Pancreas (tissue), 10 donors: ENCODE measurements at regions of chr17 and their contacts with region 1.

Region 1: DNA sequence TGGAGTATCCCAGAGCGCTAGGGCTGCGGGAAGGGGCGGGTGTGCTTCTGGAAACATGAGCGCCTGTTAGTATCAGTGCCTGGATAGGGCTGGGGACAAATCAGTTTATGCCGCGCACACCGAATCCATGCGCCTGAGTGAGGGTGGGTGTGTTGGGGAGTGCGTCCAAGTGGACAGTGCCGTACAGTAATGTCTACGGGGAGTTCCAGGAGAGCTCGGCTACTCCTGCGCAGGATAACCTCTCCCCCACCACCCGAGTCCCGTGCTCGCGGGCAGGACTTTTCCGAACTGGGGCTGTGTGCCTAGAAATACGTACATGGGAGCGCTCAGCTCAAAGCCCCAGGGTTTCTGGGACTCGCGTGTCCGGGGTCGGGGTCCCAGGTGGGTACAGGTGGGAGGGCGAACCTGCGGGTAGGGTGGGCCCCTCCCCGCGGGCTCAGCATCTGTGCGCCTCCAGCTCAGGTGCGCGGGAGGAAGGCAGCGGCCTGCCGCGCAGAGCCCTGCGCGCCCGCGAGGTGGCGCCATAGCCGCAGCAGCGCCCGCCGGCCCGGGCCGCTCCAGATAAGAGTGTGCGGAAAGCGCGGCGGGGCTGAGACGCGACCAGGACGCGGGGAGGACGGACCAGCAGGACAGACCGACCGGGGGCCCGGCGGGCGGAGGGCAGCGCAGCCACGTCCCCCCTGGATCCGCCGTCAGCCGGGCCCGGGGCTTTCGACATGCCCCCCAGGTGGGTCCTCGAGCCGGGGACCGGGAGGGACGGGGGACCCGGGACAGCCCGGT is at the start of gene HIC1:
- DNase-seq: peak; percentile 51 to 93 (median 78)
- ATAC-seq: peak; percentile 66 to 75 (median 69)
- H3K4me3 ChIP-seq: peak within 1 kb of the TSS; percentile 23 to 59 (median 34)
- H3K27ac ChIP-seq: peak within 1 kb of the TSS in 2 of 4 donors; percentile 30 to 55
- H3K4me1 ChIP-seq: peaks cover 0 to 8% (median 3%) of the 10 kb centered on the region in 3 donors
- H3K27me3 ChIP-seq: peaks cover 0 to 3% (median 0%) of the 10 kb centered on the region in 4 donors
- CTCF ChIP-seq: peak; percentile 92 to 98 (median 96)
- total RNA-seq, gene HIC1: 1.0 to 15.8 (median 3.8) TPM

Region 2: GRCh38 chr17:1939981-1940809 is 114.5 kb before region 1 on chr17:
- intact Hi-C with region 1: no loop called
- DNase-seq: no peak
- ATAC-seq: peak in 3 of 4 donors; percentile 42 to 68 (median 54)
- H3K4me3 ChIP-seq: no peak overlapping the region
- H3K27ac ChIP-seq: no peak overlapping the region
- H3K4me1 ChIP-seq: no peaks in the 10 kb centered on the region
- H3K27me3 ChIP-seq: no peaks in the 10 kb centered on the region
- CTCF ChIP-seq: no peak

Region 3: GRCh38 chr17:1958134-1958881 is 96.4 kb before region 1 on chr17:
- intact Hi-C with region 1: no loop called
- DNase-seq: no peak
- ATAC-seq: peak in 3 of 4 donors; percentile 47 to 67 (median 57)
- H3K4me3 ChIP-seq: no peak overlapping the region
- H3K27ac ChIP-seq: no peak overlapping the region
- H3K4me1 ChIP-seq: no peaks in the 10 kb centered on the region
- H3K27me3 ChIP-seq: no peaks in the 10 kb centered on the region
- CTCF ChIP-seq: no peak

Region 4: DNA sequence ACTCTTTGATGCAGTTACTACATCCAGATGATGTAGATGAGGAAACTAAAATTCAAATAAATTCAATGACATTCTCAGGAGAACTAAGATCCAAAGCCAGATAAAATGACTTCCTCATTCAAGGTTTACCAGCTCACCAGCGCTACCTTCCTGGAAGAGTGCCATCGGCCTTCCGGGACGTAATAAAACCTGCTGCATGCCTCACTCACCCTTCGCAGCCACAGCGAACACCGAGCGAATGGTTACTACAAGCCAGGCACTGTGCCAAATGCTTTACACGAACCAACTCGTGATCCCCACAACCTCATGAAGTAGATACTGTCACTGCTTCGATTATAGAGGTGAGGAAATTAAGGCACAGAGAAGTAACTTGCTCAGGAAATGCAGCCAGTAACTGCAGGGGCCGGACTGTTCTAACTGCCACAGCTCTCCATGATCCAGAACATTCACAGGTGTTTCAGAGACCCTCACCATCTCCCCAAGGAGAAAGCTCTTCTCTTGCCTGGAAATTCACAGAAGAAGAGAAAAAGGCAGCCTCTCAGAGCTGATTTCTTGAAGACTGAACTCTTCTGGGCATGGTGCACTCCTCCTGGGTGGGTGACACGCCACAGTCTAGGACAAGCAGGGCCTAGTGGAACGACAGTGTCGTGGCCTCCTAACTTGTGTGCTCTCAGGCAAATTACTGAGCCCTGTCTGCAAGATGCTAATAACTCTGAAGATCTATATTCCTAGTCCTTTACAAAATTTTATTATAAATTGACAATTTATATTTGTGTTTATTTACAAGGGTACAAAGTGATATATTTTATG is 47.0 kb after region 1 on chr17:
- intact Hi-C with region 1: no loop called
- DNase-seq: peak; percentile 55 to 80 (median 72)
- ATAC-seq: peak; percentile 66 to 84 (median 74)
- H3K4me3 ChIP-seq: no peak overlapping the region
- H3K27ac ChIP-seq: peak overlapping the region in 2 of 4 donors; percentile 8 to 38
- H3K4me1 ChIP-seq: no peaks in the 10 kb centered on the region
- H3K27me3 ChIP-seq: no peaks in the 10 kb centered on the region
- CTCF ChIP-seq: no peak

Region 5: DNA sequence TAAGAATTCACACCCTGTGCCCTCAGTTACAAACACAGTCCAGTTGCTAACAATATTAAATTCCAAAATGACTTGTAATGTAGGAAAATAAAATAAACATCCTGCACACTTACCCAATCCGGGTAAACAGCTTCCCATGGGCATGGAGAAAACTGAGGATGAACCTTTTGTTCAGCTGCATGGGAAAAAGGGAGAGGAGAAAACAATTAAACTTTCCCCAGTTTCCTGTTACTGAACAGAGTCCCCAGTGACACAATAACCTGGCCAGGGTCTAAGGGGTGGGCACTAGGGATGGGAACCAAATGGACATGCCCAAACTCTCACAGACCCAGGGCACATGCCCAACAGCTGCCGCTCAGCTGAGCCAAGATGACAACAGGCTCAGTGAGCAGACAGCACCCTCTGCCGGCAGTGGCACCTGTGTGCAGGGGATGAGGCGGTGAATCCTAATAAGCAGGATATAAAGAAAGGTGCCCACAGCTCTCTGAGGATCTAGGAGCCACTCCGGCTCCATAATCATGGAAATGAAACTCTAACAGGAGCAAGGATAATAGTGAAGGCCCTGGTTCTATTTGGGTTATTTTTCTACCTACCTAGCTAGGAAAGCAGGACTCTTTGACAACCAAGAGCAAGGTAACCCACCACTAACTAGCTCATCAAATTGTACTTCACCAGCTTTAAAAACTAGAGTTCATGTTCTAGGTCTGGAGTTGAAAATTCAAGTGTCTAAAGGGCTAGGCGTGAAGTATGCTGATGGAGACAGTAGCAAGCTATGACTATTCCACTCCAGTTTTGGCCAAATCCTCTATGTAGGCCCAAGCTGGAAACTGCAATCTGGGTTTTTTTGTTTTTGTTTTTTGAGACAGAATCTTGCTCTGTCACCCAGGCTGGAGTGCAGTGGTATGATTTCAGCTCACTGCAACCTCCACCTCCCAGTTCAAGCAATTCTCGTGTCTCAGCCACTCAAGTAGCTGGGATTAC is 190.1 kb after region 1 on chr17:
- intact Hi-C with region 1: loop called in 2 of 3 experiments (anchors 2 to 5 kb)
- DNase-seq: peak; percentile 67 to 94 (median 88)
- ATAC-seq: peak; percentile 94 to 99 (median 98)
- H3K4me3 ChIP-seq: no peak overlapping the region
- H3K27ac ChIP-seq: no peak overlapping the region
- H3K4me1 ChIP-seq: peaks cover 0 to 5% (median 0%) of the 10 kb centered on the region in 3 donors
- H3K27me3 ChIP-seq: no peaks in the 10 kb centered on the region
- CTCF ChIP-seq: peak; percentile 84 to 94 (median 88)